Breast epithelium (tissue), 4 donors: ENCODE measurements at regions of chr3 and their contacts with region 1.

Region 1: DNA sequence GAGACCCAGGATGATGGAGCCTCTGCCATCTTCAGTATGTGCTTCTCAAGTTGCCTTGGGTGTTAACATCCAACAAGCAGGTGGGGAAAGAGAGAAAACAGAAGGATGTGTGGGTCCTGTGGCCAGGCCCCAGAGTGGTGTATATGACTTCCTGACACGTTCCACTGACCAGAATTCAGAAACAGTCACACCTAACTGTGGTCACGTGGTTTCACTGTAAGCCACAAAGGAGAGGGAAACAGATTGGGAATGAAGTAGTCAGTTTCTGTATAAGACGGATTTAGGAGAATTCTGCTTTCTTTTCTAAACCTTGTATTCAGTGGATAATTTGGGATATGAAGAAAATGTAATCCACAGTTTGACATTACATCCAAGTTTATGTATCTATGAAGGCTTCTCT is 454.1 kb upstream of the IL12A start:
- DNase-seq: no peak
- H3K4me3 ChIP-seq: no peak overlapping the region
- H3K27ac ChIP-seq: no peak overlapping the region
- H3K4me1 ChIP-seq: no peaks in the 10 kb centered on the region
- H3K27me3 ChIP-seq: no peaks in the 10 kb centered on the region
- CTCF ChIP-seq: no peak
- POLR2A ChIP-seq: no peak

Region 2: GRCh38 chr3:157551961-157552360 is 1982.5 kb before region 1 on chr3:
- intact Hi-C with region 1: no loop called
- DNase-seq: no peak
- H3K4me3 ChIP-seq: no peak overlapping the region
- H3K27ac ChIP-seq: no peak overlapping the region
- H3K4me1 ChIP-seq: no peaks in the 10 kb centered on the region
- H3K27me3 ChIP-seq: no peaks in the 10 kb centered on the region
- CTCF ChIP-seq: no peak
- POLR2A ChIP-seq: no peak

Region 3: GRCh38 chr3:159565319-159565718 is 30.8 kb after region 1 on chr3:
- intact Hi-C with region 1: loop called (anchors 2 kb)
- DNase-seq: no peak
- H3K4me3 ChIP-seq: no peak overlapping the region
- H3K27ac ChIP-seq: no peak overlapping the region
- H3K4me1 ChIP-seq: no peaks in the 10 kb centered on the region
- H3K27me3 ChIP-seq: no peaks in the 10 kb centered on the region
- CTCF ChIP-seq: no peak
- POLR2A ChIP-seq: no peak